ENCODE measurements at regions of chr10 and their contacts with region 1.

Region 1: DNA sequence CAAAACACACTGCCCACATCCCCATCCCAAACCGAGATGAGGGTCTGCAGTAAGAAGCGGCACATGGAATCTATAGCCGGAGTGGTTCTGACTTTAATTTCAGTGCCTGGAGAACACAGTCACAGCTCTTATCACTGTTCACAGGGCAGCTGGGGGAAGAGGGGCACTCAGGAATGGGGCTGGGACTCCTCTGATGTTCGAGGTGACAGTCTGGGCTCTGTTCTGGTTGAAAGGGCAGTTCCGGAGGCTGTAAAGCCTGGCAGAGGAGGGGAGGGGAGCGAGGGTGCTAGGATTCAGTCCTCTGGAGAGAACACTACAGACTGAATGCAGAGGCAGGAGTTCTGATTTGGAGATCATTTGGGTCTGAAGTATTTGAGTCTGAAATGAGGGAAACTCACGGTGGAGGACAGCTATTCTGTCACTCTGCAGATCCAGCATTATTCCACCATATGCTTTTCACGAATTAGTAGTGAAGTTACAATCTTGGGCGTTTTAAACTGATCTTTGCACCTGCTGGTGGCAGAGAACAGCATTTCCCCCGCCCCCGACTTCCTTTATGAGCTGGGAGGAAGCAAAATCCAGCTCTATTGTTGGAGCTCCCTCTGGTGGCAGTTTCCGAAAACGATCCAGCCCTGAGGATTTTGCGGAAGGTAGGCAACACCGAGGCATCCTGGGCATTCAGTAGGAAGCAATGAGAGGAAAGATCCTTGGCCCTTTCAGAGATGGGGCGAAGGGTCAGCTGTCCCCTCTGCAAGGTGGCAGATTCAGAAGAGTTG is 22.7 kb upstream of the KCNK18 start:
- DNase-seq: peak; percentile 83
- H3K4me3 ChIP-seq: peak overlapping the region; percentile 66
- H3K27ac ChIP-seq: no peak overlapping the region
- H3K4me1 ChIP-seq: no peaks in the 10 kb centered on the region
- H3K27me3 ChIP-seq: peaks cover 43% of the 10 kb centered on the region

Region 2: GRCh38 chr10:116669832-116670644 is 504.6 kb before region 1 on chr10:
- in situ Hi-C with region 1: loop called (anchors 10 kb)
- DNase-seq: peak; percentile 30
- H3K4me3 ChIP-seq: no peak overlapping the region
- H3K27ac ChIP-seq: no peak overlapping the region
- H3K4me1 ChIP-seq: peaks cover 25% of the 10 kb centered on the region
- H3K27me3 ChIP-seq: no peaks in the 10 kb centered on the region

Region 3: GRCh38 chr10:116792817-116793216 is 381.8 kb before region 1 on chr10:
- in situ Hi-C with region 1: loop called (anchors 5 kb)
- DNase-seq: no peak
- H3K4me3 ChIP-seq: no peak overlapping the region
- H3K27ac ChIP-seq: no peak overlapping the region
- H3K4me1 ChIP-seq: no peaks in the 10 kb centered on the region
- H3K27me3 ChIP-seq: no peaks in the 10 kb centered on the region

Region 4: GRCh38 chr10:116944911-116945310 is 229.7 kb before region 1 on chr10:
- in situ Hi-C with region 1: no loop called
- DNase-seq: no peak
- H3K4me3 ChIP-seq: no peak overlapping the region
- H3K27ac ChIP-seq: no peak overlapping the region
- H3K4me1 ChIP-seq: peaks cover 17% of the 10 kb centered on the region
- H3K27me3 ChIP-seq: no peaks in the 10 kb centered on the region

Measured in GM23248 (cell line).